Activated T-helper 1 cell treated with anti-CD3 and anti-CD28 coated beads, Interleukin-12 subunit alpha, Interleukin-12 subunit beta, Interleukin-2, Interleukin-4 antibody, amounts not matched to agents 30 ng/mL and 10 ng/mL and 1 ng/mL, durations not matched to agents 14 hours and 24 hours and 36 hours (primary cell): ENCODE measurements at regions of chr17 and their contacts with region 1.

Region 1: GRCh38 chr17:12256380-12256995 is 235.8 kb downstream of the MAP2K4 start:
- DNase-seq: no peak
- H3K4me3 Mint-ChIP-seq: no peak overlapping the region
- H3K27ac Mint-ChIP-seq: no peak overlapping the region
- H3K4me1 Mint-ChIP-seq: no peaks in the 10 kb centered on the region
- H3K27me3 Mint-ChIP-seq: peaks cover 2% of the 10 kb centered on the region

Region 2: GRCh38 chr17:13002766-13003451 is 746.4 kb after region 1 on chr17:
- intact Hi-C with region 1: loop called (anchors 5 kb)
- DNase-seq: no peak
- H3K4me3 Mint-ChIP-seq: no peak overlapping the region
- H3K27ac Mint-ChIP-seq: no peak overlapping the region
- H3K4me1 Mint-ChIP-seq: no peaks in the 10 kb centered on the region
- H3K27me3 Mint-ChIP-seq: no peaks in the 10 kb centered on the region